Dendritic cell treated with granulocyte-macrophage colony-stimulating factor and Interleukin-4, amounts not matched to agents 40 ng/mL and 50 ng/mL, for 4 days (primary cell): ENCODE measurements at regions of chr11 and their contacts with region 1.

Region 1: GRCh38 chr11:118497831-118498230 is 29.4 kb upstream of the TTC36 start:
- H3K4me3 Mint-ChIP-seq: no peak overlapping the region
- H3K27ac Mint-ChIP-seq: no peak overlapping the region
- H3K4me1 Mint-ChIP-seq: no peaks in the 10 kb centered on the region
- H3K27me3 Mint-ChIP-seq: no peaks in the 10 kb centered on the region

Region 2: GRCh38 chr11:118380571-118380970 is 117.3 kb before region 1 on chr11:
- intact Hi-C with region 1: loop called (anchors 5 kb)
- H3K4me3 Mint-ChIP-seq: no peak overlapping the region
- H3K27ac Mint-ChIP-seq: no peak overlapping the region
- H3K4me1 Mint-ChIP-seq: no peaks in the 10 kb centered on the region
- H3K27me3 Mint-ChIP-seq: no peaks in the 10 kb centered on the region

Region 3: DNA sequence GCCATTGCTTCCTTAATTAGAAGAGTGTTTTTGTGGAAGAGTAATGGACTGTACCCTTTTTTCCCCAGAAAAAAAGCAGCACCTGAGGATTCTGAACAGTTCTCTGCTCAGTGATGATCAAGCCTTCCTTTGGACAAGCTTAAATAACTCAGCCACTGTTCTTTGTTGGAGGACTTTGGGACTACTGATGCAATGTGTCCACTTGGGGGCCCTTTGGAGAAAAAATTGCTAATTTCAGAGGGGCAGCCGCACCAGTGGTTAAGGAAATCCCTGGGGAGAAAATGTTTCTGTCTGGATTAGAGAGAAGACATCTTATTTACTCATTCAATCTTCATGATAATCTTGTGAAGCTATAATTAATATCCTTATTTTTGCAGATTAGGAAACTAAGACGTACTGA is 66.9 kb before region 1 on chr11:
- intact Hi-C with region 1: no loop called
- H3K4me3 Mint-ChIP-seq: no peak overlapping the region
- H3K27ac Mint-ChIP-seq: no peak overlapping the region
- H3K4me1 Mint-ChIP-seq: peaks cover 23% of the 10 kb centered on the region
- H3K27me3 Mint-ChIP-seq: peaks cover 23% of the 10 kb centered on the region

Region 4: DNA sequence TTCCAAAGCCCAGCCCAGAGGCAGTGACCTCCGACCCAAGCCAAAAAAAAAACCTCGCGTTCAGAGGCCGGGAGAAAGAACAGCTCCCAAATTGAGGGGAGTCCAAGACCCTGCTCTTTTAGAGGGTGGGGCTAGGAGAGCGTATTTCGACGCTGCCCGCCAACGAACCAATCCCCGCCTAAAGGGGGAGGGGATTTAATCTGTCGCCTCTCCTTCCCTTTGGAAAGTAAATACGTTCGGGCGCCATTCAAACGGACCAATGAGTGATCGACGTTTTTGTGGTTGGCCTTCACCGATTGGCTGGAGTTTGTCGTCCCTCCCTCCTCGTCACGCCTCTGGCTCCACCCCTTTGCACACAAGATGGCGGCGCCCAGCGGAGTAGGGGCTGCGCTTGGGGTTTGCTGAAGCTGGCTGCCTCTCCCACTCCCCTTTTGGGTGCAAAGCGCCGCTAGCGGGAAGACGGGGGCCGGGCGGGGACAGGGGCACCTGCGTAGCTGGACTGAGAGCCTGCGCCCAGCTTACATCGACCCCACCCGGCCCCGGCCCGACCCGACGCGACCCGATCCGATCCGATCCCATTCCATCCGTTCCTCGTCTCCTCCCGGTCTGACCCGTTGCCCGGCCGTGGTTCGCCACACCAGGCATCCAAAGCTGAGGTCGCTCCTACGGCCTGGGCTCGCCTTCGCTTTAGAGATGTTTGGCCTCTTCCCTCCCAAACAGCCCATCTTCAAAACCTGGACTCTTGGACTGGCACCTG is 836.5 kb after region 1 on chr11 and contains the start of gene RNF26:
- intact Hi-C with region 1: no loop called
- H3K4me3 Mint-ChIP-seq: peak within 1 kb of the TSS; percentile 98
- H3K27ac Mint-ChIP-seq: peak within 1 kb of the TSS; percentile 95
- H3K4me1 Mint-ChIP-seq: peaks cover 49% of the 10 kb centered on the region
- H3K27me3 Mint-ChIP-seq: peaks cover 18% of the 10 kb centered on the region